PC-3 (cell line): ENCODE measurements at regions of chr12 and their contacts with region 1.

Region 1: DNA sequence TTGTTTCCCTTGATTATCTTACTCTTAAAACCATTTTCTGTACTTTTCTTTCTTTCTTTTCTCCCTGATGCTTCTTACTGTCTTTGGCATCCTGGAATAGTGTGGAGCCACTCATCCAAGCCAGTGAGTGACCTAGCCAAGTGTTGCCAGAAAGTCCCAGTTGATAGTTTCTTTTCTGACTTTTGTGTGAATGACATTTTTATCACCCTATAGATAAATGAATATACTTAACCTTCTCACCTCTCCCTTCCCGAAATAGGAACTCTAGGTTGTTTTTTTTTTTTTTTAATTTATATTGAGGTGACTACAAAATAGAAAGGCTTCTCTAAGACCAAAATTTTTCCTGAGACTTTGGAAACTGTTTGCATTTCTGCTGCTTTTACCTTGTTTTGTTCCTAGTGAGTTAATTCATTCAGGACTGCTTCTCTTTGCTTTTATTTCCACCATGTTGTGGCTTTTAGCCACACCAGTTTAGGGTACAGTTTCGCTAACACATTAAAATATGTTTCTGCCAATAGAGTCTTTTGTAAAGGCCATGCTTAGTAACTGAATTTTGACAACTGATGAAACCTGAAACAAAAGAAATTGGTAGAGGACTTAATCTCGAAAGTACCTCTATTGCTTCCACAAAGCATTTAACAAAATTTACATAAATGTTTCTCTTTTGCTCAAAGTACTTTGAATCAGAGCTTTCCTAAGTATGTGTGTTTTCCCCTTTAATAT is 194.6 kb downstream of the ERC1 start:
- DNase-seq: no peak
- ATAC-seq: no peak
- H3K4me3 ChIP-seq: no peak overlapping the region
- H3K27ac ChIP-seq: peak overlapping the region; percentile 72
- H3K4me1 ChIP-seq: peaks cover 58% of the 10 kb centered on the region
- H3K27me3 ChIP-seq: no peaks in the 10 kb centered on the region
- CTCF ChIP-seq: no peak

Region 2: DNA sequence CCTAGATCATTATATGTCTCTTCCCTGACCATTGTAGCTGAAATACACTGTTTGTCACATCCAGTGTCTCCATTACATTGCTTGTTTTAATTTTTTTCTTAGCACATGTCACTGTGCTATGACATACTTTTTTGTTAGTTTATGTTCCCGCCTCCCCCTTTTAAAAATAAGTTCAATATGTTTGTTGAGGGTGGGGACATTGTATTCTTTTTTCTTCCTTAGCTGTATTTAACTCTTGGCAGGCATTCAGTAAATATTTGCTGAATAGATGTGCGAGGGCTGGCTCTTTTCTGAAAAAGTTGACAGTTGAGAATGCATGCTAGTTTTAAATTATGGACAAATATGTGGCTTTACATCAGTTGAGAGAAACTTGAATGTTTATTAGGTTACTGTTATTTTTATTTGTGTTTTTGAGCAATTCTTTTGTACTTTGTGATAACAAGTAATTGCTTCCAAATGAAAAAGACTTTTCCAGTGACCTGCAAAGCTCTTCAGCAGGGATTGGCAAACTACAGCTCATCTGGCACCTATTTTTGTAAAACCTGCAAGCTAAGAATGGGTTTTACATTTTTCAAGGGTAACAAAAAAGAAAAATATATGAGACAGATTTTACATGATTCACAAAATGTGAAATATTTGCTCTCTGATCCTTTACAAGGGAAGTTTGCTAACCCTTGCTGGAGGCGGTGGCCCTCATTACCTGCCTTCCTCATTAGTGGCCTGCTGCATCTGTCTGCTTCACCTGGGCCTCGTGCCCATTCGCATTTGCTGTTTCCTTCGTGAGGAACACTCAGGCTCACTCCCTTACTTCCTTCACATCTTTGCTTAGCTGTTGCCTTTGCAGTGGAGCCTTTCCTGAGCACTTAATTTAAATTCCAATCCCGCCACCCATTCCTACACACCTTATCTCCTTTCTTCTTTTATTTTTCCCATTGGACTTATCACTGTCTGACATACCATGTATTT is 34.8 kb after region 1 on chr12:
- CTCF ChIA-PET with region 1: no interaction called
- POLR2A ChIA-PET with region 1: no interaction called
- intact Hi-C with region 1: loop called (anchors 5 kb)
- DNase-seq: peak; percentile 73
- ATAC-seq: peak; percentile 42
- H3K4me3 ChIP-seq: no peak overlapping the region
- H3K27ac ChIP-seq: peak overlapping the region; percentile 90
- H3K4me1 ChIP-seq: peaks cover 63% of the 10 kb centered on the region
- H3K27me3 ChIP-seq: no peaks in the 10 kb centered on the region
- CTCF ChIP-seq: no peak